Posterior cingulate gyrus (tissue), 11 donors: ENCODE measurements at regions of chr2 and their contacts with region 1.

Region 1: DNA sequence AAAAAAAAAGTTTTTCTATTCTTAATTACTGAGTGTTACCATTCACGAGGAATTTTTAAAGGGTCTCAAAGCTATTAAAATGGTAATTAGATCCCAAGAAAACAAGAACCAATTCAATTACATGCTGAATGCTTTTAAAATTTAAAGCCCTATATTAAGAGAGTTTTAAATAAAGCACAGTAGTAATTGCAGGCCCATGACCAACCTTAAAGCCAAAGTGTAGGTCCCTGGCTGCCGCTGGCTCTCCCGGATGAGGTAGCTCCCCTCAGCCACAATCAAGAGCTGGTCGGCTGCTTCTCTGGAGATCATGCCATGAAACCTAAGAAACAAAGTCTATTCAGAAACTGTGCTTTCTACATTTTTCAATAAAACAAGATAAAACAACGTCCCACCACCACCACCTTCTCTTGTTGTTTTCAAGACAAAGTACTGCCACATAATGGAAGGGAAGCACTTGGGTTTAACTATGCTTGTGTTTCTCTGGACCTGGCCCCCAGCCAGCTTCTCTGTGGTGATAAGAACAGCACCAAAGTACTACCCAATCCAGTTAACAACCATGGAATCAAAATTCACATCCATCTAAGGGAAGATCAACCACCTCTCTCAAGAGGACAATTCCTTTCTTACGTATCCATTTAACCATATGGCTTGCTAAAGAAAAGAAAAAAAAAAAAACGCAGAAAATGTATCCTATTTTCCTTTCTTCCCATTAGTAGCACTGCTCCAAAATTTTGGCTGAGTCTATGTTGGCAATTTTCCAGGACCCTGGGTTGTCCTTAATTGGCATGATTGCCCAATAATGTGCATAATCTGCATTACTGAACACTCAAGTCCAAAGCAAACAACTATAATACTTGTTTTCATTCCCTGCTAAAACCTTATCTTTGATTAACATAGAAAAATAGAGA is 90.1 kb downstream of the CHN1 start:
- DNase-seq: peak in 6 of 10 donors; percentile 24 to 82 (median 30)

Region 2: DNA sequence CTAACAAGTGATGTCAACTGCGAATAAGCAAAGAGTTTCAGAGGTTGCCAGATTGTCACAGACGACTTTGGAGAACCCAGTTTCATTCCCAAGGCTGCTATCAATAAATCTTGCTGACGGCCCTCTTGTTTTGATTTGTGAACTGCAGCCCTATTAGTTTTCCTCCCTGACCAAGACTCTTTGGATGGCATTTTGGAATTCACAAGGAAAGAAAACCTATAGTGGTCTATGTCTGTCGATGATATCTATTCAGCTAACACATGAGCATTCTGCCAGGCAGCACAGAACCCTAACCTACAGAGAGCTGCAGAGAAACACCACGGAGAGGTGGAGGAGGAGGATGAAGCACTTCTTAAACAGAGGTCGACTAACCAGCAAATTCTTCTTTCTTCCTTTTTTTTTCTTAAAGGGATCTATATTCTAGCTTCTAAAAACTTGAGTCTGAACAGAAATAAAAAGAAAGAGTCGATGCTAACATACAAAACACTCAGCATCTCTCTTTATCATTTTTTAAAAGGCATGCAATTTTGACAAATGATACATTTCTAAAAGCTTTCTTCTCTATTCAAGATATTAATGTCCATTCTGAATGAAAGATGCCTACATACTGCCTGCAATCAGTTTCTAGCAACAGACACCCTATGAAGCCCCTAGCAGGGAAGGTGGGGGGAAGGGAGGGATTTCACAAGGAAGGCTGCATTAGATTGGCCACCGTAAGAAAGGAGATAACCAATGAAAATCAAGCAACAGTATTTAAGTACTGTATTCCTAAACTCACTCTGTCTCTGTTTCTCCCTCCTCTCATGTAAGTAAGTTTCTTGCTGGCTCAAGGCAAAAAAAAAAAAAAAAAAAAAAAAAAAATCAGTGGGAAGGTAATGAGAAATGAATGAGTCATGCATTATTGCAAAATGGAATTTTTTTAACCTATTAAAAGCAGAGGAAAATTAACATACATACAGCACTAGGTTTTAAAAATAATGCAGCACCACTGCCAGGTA is 67.9 kb before region 1 on chr2:
- intact Hi-C with region 1: loop called (anchors 10 kb)
- DNase-seq: peak in 7 of 10 donors; percentile 16 to 89 (median 45)

Region 3: DNA sequence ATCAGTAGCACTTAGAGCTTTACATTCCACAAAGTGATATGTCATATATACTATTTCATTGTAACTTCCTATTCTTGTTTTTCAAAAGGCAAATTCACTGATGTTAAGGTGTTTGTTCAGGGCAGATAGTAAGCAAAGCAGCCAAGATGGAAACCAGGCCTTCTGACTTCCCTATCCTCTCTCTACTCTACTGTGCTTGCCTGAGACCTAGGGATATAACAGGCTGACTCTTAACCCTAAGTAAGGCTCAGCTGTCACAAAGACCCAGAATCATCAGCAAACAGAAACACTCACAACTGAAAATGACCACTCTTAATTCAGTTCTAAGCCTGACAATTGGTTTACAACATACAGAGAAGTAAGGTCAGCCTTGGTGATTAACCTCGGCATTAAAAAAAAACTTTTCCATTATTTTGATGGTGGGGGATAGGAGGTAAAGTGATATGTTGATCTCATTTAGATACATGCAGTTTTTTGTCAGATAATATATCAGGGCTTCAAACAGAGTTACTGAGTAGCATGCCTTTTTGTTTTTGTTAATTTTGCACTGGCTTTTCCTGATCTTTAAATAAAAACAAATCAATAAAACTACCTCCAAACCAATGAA is 55.4 kb before region 1 on chr2:
- intact Hi-C with region 1: no loop called
- DNase-seq: no peak